Activated CD4-positive, alpha-beta memory T cell treated with anti-CD3 and anti-CD28 coated beads for 36 hours (primary cell): ENCODE measurements at regions of chr12 and their contacts with region 1.

Region 1: DNA sequence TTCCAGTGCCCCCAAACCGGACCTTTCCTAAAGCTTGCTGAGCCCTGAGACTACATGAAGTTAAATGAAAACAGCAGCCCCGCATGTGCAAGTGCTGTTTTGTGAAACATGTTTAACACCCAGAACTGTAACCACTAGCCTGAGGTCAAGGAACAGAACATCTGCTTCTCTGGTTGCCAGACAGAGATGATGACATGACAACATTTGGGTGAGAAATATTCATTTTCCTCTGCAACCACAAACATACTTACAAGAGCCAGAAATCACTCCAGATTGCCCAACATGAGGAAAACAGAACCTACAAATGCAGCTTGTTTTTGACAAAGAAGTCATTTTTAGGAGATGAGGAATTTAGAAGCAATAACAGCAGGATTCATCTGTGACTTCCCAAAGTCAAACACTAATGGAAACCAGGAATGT is 110.4 kb downstream of the BCAT1 start:
- DNase-seq: peak; percentile 57
- H3K4me3 Mint-ChIP-seq: peak overlapping the region; percentile 20
- H3K27ac Mint-ChIP-seq: peak overlapping the region; percentile 85
- H3K4me1 Mint-ChIP-seq: peaks cover 44% of the 10 kb centered on the region
- H3K27me3 Mint-ChIP-seq: peaks cover 5% of the 10 kb centered on the region

Region 2: GRCh38 chr12:24600996-24601395 is 237.5 kb before region 1 on chr12:
- CTCF ChIA-PET with region 1: no interaction called
- POLR2A ChIA-PET with region 1: no interaction called
- intact Hi-C with region 1: loop called (anchors 1 kb)
- DNase-seq: no peak
- H3K4me3 Mint-ChIP-seq: no peak overlapping the region
- H3K27ac Mint-ChIP-seq: peak overlapping the region; percentile 42
- H3K4me1 Mint-ChIP-seq: peaks cover 5% of the 10 kb centered on the region
- H3K27me3 Mint-ChIP-seq: peaks cover 5% of the 10 kb centered on the region

Region 3: DNA sequence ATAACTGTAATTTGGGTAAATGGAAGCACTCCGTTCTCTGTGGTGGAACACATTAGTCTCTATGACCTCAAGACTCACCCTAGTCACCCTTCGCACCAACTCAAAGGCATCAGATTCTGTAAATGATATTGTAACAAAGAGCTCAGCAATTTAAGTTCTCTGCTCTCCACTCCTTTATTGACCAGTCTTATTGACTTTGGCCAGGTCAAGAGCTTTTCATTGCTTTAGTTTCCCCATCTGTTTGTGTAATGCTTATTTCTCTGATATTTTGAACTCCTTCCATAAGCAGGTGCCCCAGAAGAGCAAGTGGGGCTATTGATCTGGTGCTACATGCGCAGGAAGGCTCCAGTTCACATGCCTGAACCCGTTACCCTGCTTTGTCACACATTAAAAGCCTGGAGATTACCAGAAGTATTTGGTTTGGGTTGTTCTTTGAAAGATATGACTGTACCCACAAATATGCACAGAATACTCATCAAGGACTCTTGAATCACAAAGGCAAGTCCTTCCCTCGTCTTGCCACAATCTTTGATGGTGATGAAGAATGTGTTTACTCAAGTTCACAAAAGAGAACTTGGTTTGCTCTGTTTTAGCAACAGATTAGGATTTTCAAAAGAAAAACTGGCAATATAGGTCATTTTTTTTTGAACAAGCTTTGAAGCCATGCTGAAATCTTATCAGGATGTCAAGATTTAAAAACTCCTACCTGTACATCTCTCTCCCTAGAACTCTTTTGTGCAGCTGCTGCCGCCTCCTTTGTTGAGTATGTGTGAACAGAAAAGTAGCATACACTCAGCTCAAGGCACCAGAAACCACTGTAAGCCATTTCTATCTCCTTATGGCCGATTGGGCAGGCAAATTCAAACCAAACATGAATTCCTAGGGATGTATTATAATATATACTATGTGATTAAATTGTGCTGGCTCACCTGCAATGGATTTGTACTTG is 83.6 kb before region 1 on chr12:
- CTCF ChIA-PET with region 1: interaction called, 3 read pairs
- POLR2A ChIA-PET with region 1: interaction called, 10 read pairs
- intact Hi-C with region 1: loop called (anchors 1 kb)
- DNase-seq: peak; percentile 42
- H3K4me3 Mint-ChIP-seq: no peak overlapping the region
- H3K27ac Mint-ChIP-seq: peak overlapping the region; percentile 73
- H3K4me1 Mint-ChIP-seq: peaks cover 30% of the 10 kb centered on the region
- H3K27me3 Mint-ChIP-seq: peaks cover 7% of the 10 kb centered on the region

Region 4: GRCh38 chr12:24902511-24903328 is 64.2 kb after region 1 on chr12:
- CTCF ChIA-PET with region 1: interaction called, 4 read pairs
- POLR2A ChIA-PET with region 1: interaction called, 11 read pairs
- intact Hi-C with region 1: loop called (anchors 1 kb)
- DNase-seq: peak; percentile 39
- H3K4me3 Mint-ChIP-seq: peak overlapping the region; percentile 81
- H3K27ac Mint-ChIP-seq: peak overlapping the region; percentile 60
- H3K4me1 Mint-ChIP-seq: peaks cover 32% of the 10 kb centered on the region
- H3K27me3 Mint-ChIP-seq: peaks cover 19% of the 10 kb centered on the region

Region 5: GRCh38 chr12:24997970-24998582 is 159.5 kb after region 1 on chr12:
- CTCF ChIA-PET with region 1: no interaction called
- POLR2A ChIA-PET with region 1: no interaction called
- intact Hi-C with region 1: loop called (anchors 1 kb)
- DNase-seq: no peak
- H3K4me3 Mint-ChIP-seq: no peak overlapping the region
- H3K27ac Mint-ChIP-seq: peak overlapping the region; percentile 21
- H3K4me1 Mint-ChIP-seq: peaks cover 27% of the 10 kb centered on the region
- H3K27me3 Mint-ChIP-seq: no peaks in the 10 kb centered on the region

Region 6: DNA sequence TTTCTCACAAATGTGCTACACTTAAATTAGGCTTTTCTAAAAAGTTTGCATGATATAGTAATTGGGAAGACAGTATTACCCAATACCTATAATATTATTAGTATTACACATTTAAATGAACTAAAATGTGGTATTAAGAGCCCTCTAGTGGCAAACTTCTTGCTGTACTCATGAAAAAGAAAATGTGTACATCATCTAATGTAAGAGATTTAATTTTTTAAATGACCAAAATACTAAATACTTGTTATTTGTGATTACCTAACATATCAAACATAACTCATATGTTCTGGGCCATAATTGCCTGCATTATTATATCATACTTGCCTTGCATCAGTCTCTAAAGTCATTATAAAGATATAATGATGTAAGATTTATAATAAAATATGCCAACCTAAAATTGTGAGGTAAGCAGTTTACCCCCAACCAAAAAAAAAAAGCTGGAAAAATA is 292.2 kb after region 1 on chr12:
- CTCF ChIA-PET with region 1: no interaction called
- POLR2A ChIA-PET with region 1: no interaction called
- intact Hi-C with region 1: no loop called
- DNase-seq: no peak
- H3K4me3 Mint-ChIP-seq: no peak overlapping the region
- H3K27ac Mint-ChIP-seq: no peak overlapping the region
- H3K4me1 Mint-ChIP-seq: no peaks in the 10 kb centered on the region
- H3K27me3 Mint-ChIP-seq: no peaks in the 10 kb centered on the region